ENCODE measurements at regions of chr16 and their contacts with region 1.

Region 1: DNA sequence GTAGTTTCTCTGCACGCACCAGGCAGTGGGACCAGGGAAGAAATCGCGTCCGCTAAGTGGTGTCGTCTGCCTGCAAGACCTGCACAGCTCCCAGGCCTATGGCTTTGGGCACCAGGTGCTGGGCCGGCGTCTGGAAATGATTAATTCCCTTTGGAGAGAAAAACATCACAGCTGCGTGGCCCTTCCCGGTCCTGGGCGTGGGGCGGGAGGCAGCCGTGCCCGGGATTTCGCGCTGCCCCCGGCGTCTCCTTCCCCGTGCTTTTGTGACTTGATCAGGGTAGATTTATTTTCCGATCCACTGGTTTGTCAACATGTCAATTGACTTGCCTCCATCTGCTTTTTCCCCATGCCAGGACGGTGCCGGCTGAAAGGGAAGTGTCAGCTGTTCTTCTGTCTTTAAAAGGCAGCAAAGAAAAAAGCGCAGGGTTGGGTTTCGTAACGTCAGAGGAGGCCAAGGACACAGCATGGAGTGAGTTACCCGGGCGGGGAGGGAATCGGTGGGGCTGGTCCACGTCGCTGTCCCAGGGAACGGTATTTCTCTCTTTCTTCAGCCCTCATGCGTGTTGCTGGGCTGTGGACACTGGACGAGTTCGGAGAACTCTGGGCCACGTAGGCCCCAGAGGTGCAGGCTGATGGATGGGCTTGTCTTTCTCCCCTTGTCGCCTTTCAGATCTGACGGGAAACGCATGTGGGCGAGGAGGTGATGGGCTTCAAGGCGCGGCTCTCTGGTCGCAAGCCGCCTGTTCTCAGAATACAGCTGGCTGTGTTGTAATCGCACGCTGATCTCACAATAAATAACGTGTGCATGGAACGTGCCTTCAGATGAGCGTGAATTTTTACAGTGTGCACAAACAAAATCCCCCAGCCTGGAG is 188.1 kb upstream of the ZNF469 start:
- ATAC-seq: peak; percentile 47 to 85 (median 78)
- H3K4me3 ChIP-seq: no peak overlapping the region
- H3K27ac ChIP-seq: peak overlapping the region; percentile 74 to 80
- H3K4me1 ChIP-seq: peaks cover 19 to 22% of the 10 kb centered on the region in 2 donors

Region 2: DNA sequence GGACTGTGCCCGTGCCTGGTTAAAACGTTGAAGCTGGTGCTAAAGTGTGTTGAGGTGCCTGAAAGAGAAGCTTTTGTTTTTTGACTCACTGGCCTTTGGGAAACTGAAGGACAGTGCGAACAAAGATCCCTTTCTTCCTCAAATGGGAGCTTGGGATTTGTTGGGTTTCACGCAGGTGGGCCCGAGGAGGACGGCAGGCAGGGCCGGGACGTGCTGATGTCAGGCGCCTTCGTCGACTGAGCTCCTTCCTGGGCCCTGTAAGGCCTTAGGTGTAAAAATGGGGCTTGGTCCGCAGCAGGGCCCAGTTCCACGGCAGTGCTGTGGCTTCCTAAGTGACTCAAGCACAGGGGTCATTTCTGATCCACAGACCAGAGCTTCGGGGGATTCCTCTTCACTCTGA is 136.5 kb before region 1 on chr16:
- in situ Hi-C with region 1: no loop called
- ATAC-seq: no peak
- H3K4me3 ChIP-seq: no peak overlapping the region
- H3K27ac ChIP-seq: no peak overlapping the region
- H3K4me1 ChIP-seq: peaks cover 0 to 3% of the 10 kb centered on the region in 2 donors

Region 3: GRCh38 chr16:88405216-88406060 is 210.8 kb after region 1 on chr16:
- in situ Hi-C with region 1: loop called in 1 of 9 experiments (anchors 25 kb)
- ATAC-seq: peak; percentile 52 to 95 (median 64)
- H3K4me3 ChIP-seq: no peak overlapping the region
- H3K27ac ChIP-seq: no peak overlapping the region
- H3K4me1 ChIP-seq: peaks cover 0 to 4% of the 10 kb centered on the region in 2 donors

Region 4: GRCh38 chr16:88505405-88506082 is 310.9 kb after region 1 on chr16:
- in situ Hi-C with region 1: loop called in 1 of 9 experiments (anchors 25 kb)
- ATAC-seq: peak in 6 of 8 experiments; percentile 12 to 48 (median 35)
- H3K4me3 ChIP-seq: no peak overlapping the region
- H3K27ac ChIP-seq: peak overlapping the region; percentile 56 to 81
- H3K4me1 ChIP-seq: peaks cover 37 to 48% of the 10 kb centered on the region in 2 donors

Measured in motor neuron (in vitro differentiated cells).